HCT116 (cell line): ENCODE measurements at regions of chr4 and their contacts with region 1.

Region 1: GRCh38 chr4:55184600-55185523 is 59.5 kb upstream of the KDR start:
- DNase-seq: peak; percentile 64
- ATAC-seq: peak; percentile 80
- H3K4me3 ChIP-seq: peak overlapping the region in 1 of 2 experiments; percentile 17; a peak in 2 of 4 replicates
- H3K27ac ChIP-seq: peak overlapping the region; percentile 59
- H3K4me1 ChIP-seq: peaks cover 16 to 21% of the 10 kb centered on the region in 2 experiments
- H3K27me3 ChIP-seq: no peaks in the 10 kb centered on the region
- CTCF ChIP-seq: peak; percentile 53 to 79 (median 69); a peak in 5 of 6 replicates
- POLR2A ChIP-seq: no peak
- RAD21 ChIP-seq: peak; percentile 56

Region 2: DNA sequence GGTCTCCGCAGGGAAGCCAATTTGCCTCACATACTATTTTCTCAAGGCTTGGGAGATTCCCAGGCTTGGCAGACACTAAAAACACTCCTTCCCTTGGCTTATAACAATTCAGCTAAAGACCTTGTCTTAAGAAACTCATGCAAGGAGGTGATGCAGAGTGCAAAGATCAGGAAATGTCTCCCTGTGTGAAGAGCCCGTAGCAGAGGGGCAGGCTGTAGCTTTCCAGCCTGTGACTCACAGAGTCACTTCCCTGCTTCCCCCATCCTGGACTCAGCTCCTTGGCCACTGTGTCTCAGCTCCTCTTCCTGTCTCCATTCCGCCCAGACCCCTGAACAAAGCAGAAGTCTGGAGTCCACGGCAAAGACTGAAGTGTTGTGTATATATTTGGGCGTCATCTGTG is 115.6 kb before region 1 on chr4:
- CTCF ChIA-PET with region 1: no interaction called
- POLR2A ChIA-PET with region 1: no interaction called
- RAD21 ChIA-PET with region 1: no interaction called
- intact Hi-C with region 1: no loop called
- DNase-seq: no peak
- ATAC-seq: no peak
- H3K4me3 ChIP-seq: no peak overlapping the region
- H3K27ac ChIP-seq: no peak overlapping the region
- H3K4me1 ChIP-seq: peaks cover 0 to 7% of the 10 kb centered on the region in 2 experiments; a peak in 2 of 4 replicates
- H3K27me3 ChIP-seq: no peaks in the 10 kb centered on the region
- CTCF ChIP-seq: no peak
- POLR2A ChIP-seq: no peak
- RAD21 ChIP-seq: no peak

Region 3: DNA sequence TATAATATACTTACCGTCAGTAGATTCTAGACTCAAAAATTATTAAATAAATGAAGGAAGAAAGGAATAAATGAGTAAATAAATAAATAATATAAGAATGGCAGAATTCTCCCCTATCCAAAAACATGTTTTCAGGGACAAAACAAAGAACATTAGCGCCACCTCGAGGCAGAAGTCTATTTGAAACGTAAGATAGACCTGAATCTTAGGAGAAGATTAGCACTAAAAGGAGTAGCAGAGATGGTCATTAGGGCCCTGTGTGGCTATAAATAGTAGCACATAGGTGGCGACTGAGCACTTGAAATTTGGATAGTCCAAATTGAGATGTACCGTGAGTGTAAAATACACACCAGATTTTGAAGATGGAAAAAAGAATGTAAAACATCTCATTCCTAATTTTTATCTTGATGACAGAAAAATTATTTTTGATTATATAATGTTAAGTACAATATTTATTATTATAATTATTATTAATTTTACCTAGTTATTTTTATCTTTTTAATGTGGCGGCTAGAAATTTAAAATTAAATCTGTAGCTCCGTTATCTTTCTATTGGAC is 136.9 kb after region 1 on chr4:
- CTCF ChIA-PET with region 1: interaction called, 31 read pairs
- POLR2A ChIA-PET with region 1: no interaction called
- RAD21 ChIA-PET with region 1: no interaction called
- intact Hi-C with region 1: loop called (anchors 1 kb)
- DNase-seq: peak; percentile 88
- ATAC-seq: peak; percentile 99
- H3K4me3 ChIP-seq: no peak overlapping the region
- H3K27ac ChIP-seq: no peak overlapping the region
- H3K4me1 ChIP-seq: peaks cover 0 to 10% of the 10 kb centered on the region in 2 experiments; a peak in 1 of 4 replicates
- H3K27me3 ChIP-seq: no peaks in the 10 kb centered on the region
- CTCF ChIP-seq: peak; percentile 60 to 96 (median 68)
- POLR2A ChIP-seq: no peak
- RAD21 ChIP-seq: peak; percentile 93

Region 4: GRCh38 chr4:55736605-55737183 is 551.8 kb after region 1 on chr4:
- CTCF ChIA-PET with region 1: interaction called, 5 read pairs
- POLR2A ChIA-PET with region 1: no interaction called
- RAD21 ChIA-PET with region 1: no interaction called
- intact Hi-C with region 1: loop called (anchors 10 kb)
- DNase-seq: peak; percentile 23
- ATAC-seq: no peak
- H3K4me3 ChIP-seq: no peak overlapping the region
- H3K27ac ChIP-seq: no peak overlapping the region
- H3K4me1 ChIP-seq: peaks cover 5 to 18% of the 10 kb centered on the region in 2 experiments
- H3K27me3 ChIP-seq: no peaks in the 10 kb centered on the region
- CTCF ChIP-seq: peak; percentile 23 to 58 (median 54); a peak in 4 of 6 replicates
- POLR2A ChIP-seq: no peak
- RAD21 ChIP-seq: peak; percentile 79